Gastrocnemius medialis (tissue), 4 donors: ENCODE measurements at regions of chr14 and their contacts with region 1.

Region 1: DNA sequence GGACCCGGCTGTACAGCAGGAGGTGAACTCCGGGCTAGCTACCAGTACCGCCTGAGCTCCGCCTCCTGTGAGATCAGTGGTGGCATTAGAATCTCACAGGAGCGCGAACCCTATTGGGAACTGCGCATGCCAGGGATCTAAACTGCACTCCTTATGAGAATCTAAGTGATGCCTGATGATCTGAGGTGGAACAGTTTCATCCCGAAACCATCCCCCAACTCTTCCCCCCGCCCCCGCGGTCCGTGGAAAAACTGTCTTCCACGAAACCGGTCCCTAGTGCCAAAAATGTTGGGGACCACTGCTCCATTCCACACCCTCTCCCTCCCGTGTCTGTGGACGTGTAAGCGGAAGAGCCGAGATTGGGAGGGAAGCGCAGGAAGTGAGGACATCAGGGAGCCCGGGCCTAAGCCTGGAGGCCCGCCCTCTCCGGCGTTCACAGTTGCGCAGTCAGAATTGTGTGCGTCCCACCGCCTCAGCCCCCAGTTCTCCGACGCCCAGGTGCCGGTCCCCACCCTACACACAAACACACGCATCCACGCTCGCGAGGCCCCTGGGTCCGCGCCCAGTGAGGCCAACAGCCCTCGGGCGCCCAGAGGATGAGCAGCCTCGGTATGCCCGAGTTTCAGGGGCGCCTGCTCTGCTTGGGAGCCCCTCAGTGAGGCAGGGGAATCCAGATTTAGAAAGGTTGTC is 1.8 kb upstream of the RNASE4 start:
- DNase-seq: peak; percentile 83 to 85
- ATAC-seq: peak; percentile 77 to 84
- H3K4me3 ChIP-seq: peak overlapping the region; percentile 69 to 98 (median 87)
- H3K27ac ChIP-seq: peak overlapping the region; percentile 95 to 100 (median 97)
- H3K4me1 ChIP-seq: peaks cover 11 to 20% of the 10 kb centered on the region in 2 donors
- H3K27me3 ChIP-seq: no peaks in the 10 kb centered on the region
- CTCF ChIP-seq: no peak
- POLR2A ChIP-seq: peak; percentile 93 to 94

Region 2: GRCh38 chr14:20332788-20333493 is 349.6 kb before region 1 on chr14 and contains the start of gene CCNB1IP1:
- in situ Hi-C with region 1: loop called in 2 of 4 experiments (anchors 10 to 25 kb)
- intact Hi-C with region 1: loop called (anchors 2 kb)
- DNase-seq: peak; percentile 62 to 68
- ATAC-seq: peak; percentile 100
- H3K4me3 ChIP-seq: peak within 1 kb of the TSS; percentile 61 to 77 (median 70)
- H3K27ac ChIP-seq: peak within 1 kb of the TSS; percentile 85 to 91 (median 88)
- H3K4me1 ChIP-seq: peaks cover 10 to 16% of the 10 kb centered on the region in 2 donors
- H3K27me3 ChIP-seq: no peaks in the 10 kb centered on the region
- CTCF ChIP-seq: no peak
- POLR2A ChIP-seq: peak; percentile 62 to 63
- total RNA-seq, gene CCNB1IP1: 15.7 to 42.9 (median 30.2) TPM

Region 3: DNA sequence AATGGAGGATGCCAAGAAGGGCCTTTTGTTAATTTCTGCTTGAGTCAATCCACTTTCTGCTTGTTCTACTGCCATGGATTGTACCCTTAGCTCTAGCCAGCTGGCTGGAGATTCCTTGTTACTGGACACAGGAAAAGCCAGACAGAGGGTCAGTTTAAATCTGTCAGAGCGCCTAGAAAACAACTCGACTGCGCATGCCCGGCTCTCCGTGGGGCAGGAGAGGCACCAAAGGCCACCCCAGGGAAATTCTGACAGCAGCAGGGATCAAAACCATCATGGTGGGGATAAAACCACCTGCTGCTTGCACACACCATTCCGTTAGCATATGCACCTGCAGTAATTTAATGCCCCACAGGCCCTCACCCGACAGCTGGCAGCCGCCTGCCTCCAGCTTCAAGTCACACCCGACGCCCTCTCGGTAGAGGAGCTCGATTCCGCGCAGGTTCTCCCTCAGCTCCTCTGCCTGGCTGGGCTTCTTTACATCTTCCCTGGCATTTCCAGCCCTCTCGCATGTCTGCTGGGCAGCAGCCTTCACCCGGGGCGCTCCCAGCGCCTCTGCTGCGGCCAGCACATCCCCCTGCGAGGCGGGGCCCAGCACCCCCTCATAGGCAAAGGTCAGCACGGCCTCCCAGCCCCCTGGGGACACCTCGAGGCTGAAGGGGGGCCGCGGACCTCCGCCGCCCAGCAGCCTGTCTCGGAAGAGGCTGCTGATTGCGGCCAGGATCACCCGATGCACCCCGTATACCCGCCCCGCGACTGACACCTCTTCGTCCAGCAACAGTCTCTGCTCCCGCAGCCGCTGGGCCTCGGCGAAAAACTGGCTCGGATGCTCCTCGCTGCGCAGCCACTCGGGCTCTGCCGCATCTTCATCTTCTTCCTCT is 247.6 kb before region 1 on chr14:
- in situ Hi-C with region 1: no loop called
- intact Hi-C with region 1: loop called (anchors 1 kb)
- DNase-seq: peak; percentile 77 to 91
- ATAC-seq: peak; percentile 81
- H3K4me3 ChIP-seq: peak overlapping the region; percentile 47 to 67 (median 58)
- H3K27ac ChIP-seq: peak overlapping the region; percentile 88 to 98 (median 92)
- H3K4me1 ChIP-seq: peaks cover 52 to 68% of the 10 kb centered on the region in 2 donors
- H3K27me3 ChIP-seq: no peaks in the 10 kb centered on the region
- CTCF ChIP-seq: no peak
- POLR2A ChIP-seq: peak in 1 of 2 donors; percentile 48

Region 4: GRCh38 chr14:20622816-20623291 is 59.7 kb before region 1 on chr14:
- in situ Hi-C with region 1: no loop called
- intact Hi-C with region 1: no loop called
- DNase-seq: no peak
- ATAC-seq: no peak
- H3K4me3 ChIP-seq: peak overlapping the region in 1 of 4 donors; percentile 18
- H3K27ac ChIP-seq: no peak overlapping the region
- H3K4me1 ChIP-seq: peaks cover 0 to 5% of the 10 kb centered on the region in 2 donors
- H3K27me3 ChIP-seq: peaks cover 21 to 52% (median 36%) of the 10 kb centered on the region in 3 donors
- CTCF ChIP-seq: no peak
- POLR2A ChIP-seq: no peak

Region 5: GRCh38 chr14:20632682-20633428 is 49.7 kb before region 1 on chr14:
- in situ Hi-C with region 1: no loop called
- intact Hi-C with region 1: loop called (anchors 5 kb)
- DNase-seq: no peak
- ATAC-seq: peak; percentile 39 to 56
- H3K4me3 ChIP-seq: peak overlapping the region; percentile 15 to 28 (median 22)
- H3K27ac ChIP-seq: no peak overlapping the region
- H3K4me1 ChIP-seq: peaks cover 4 to 20% of the 10 kb centered on the region in 2 donors
- H3K27me3 ChIP-seq: peaks cover 57 to 90% (median 84%) of the 10 kb centered on the region in 3 donors
- CTCF ChIP-seq: no peak
- POLR2A ChIP-seq: no peak

Region 6: GRCh38 chr14:20774338-20774737 is 91.8 kb after region 1 on chr14:
- in situ Hi-C with region 1: no loop called
- intact Hi-C with region 1: no loop called
- DNase-seq: no peak
- ATAC-seq: no peak
- H3K4me3 ChIP-seq: no peak overlapping the region
- H3K27ac ChIP-seq: no peak overlapping the region
- H3K4me1 ChIP-seq: no peaks in the 10 kb centered on the region
- H3K27me3 ChIP-seq: peaks cover 0 to 4% (median 0%) of the 10 kb centered on the region in 3 donors
- CTCF ChIP-seq: no peak
- POLR2A ChIP-seq: no peak

Region 7: DNA sequence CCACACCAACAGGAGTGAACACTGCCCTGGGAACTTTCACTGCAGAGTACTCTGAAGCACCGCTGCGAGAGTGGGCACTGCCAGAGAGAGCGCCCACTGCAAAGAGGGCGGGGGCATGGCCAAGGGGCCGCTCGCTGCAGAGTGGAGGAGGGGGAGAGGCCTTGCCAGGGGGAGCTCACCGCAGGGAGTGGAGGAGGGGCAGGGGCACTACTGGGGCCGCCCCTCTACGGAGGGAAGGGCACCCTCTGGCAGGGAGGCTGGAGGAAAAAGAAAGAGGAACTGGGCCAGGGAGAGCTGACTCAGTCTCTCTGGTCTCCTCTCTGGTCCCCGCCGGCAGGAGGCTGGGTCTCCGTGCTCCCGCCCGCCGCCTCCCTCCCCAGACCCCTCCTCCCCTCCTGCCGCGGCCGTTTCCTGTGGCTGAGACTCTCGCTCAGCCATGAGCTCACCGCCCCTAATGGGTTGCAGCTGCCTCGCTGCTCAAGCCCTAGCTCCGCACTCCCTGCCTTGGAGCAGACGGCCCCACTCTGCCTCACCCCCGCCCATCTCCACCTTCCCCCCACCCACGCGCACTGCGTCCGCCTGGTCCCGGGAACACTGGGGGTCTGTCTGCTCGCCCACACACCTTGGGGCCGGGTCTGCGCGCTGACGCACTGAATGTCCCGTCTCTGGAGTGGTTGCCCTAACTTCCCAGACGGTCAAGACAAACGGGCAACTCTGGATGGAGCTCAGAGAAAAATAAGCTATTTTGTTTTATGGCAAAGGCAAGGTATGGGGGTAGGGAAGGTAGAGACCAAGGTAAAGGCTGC is 388.8 kb after region 1 on chr14:
- in situ Hi-C with region 1: loop called in 1 of 4 experiments (anchors 25 kb)
- intact Hi-C with region 1: no loop called
- DNase-seq: peak; percentile 55 to 65
- ATAC-seq: peak; percentile 21 to 37
- H3K4me3 ChIP-seq: peak overlapping the region; percentile 68 to 83 (median 74)
- H3K27ac ChIP-seq: peak overlapping the region; percentile 84 to 91 (median 88)
- H3K4me1 ChIP-seq: peaks cover 17 to 30% of the 10 kb centered on the region in 2 donors
- H3K27me3 ChIP-seq: no peaks in the 10 kb centered on the region
- CTCF ChIP-seq: no peak
- POLR2A ChIP-seq: peak in 1 of 2 donors; percentile 19

Region 8: GRCh38 chr14:21269252-21270046 is 586.9 kb after region 1 on chr14 and contains the start of gene HNRNPC:
- in situ Hi-C with region 1: no loop called
- intact Hi-C with region 1: loop called (anchors 5 kb)
- DNase-seq: peak; percentile 99 to 100
- ATAC-seq: peak; percentile 97 to 99
- H3K4me3 ChIP-seq: peak within 1 kb of the TSS; percentile 69 to 95 (median 81)
- H3K27ac ChIP-seq: peak within 1 kb of the TSS; percentile 92 to 99 (median 95)
- H3K4me1 ChIP-seq: peaks cover 34 to 38% of the 10 kb centered on the region in 2 donors
- H3K27me3 ChIP-seq: no peaks in the 10 kb centered on the region
- CTCF ChIP-seq: no peak
- POLR2A ChIP-seq: peak; percentile 95 to 96
- total RNA-seq, gene HNRNPC: 281 to 357 (median 318) TPM